ENCODE measurements at regions of chr1 and their contacts with region 1.

Region 1: DNA sequence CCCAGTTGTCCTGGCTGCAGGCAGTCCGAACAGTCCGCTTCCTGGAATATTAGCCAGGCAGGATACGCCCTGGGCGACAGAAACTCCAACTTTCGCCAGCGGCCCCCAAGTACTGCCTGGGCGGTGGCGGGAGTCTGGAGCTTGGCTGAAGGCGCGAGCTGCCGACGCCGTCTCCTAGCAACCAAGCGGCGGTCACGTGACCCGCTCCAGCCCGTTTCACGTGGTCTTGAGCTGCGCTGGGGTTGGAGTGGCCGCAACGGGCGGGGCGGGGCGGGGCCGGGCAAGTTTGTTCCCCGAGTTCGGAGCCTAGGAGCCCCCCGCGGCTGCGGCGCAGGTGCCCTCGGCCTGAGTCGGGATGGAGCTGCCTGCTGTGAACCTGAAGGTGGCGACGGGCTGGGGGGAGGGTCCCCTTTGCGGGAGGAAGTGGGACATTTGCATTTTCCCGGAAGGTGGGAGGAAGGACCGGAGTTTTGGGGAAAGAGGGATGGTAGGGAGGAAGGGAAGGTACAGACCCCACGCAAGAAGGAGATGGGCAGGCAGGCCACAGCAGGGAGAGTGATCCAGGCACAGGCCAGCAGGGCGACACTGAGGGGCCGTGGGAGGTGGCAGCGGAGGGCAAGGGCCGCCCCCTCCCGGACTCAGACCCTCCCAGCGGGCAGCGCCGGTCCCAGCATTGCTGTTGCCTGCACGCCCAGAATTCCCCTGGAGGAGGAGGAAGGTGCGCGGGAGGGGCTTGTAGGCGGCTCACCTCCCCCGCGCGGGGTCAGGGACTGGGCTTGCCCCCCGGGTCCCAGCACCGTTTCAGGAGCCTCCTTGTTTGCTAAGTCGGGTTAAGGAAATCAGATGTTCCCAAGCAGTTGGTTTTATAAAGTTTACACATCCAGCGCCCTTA is at the start of gene AGTRAP:
- DNase-seq: peak; percentile 89
- H3K4me3 ChIP-seq: peak within 1 kb of the TSS; percentile 42 to 93 (median 57)
- H3K27ac ChIP-seq: peak within 1 kb of the TSS; percentile 18
- H3K4me1 ChIP-seq: peaks cover 14% of the 10 kb centered on the region
- H3K27me3 ChIP-seq: no peaks in the 10 kb centered on the region
- CTCF ChIP-seq: peak in 1 of 2 donors; percentile 29
- POLR2A ChIP-seq: no peak
- total RNA-seq, gene AGTRAP: 40.3 and 41.6 TPM in 2 replicates

Region 2: DNA sequence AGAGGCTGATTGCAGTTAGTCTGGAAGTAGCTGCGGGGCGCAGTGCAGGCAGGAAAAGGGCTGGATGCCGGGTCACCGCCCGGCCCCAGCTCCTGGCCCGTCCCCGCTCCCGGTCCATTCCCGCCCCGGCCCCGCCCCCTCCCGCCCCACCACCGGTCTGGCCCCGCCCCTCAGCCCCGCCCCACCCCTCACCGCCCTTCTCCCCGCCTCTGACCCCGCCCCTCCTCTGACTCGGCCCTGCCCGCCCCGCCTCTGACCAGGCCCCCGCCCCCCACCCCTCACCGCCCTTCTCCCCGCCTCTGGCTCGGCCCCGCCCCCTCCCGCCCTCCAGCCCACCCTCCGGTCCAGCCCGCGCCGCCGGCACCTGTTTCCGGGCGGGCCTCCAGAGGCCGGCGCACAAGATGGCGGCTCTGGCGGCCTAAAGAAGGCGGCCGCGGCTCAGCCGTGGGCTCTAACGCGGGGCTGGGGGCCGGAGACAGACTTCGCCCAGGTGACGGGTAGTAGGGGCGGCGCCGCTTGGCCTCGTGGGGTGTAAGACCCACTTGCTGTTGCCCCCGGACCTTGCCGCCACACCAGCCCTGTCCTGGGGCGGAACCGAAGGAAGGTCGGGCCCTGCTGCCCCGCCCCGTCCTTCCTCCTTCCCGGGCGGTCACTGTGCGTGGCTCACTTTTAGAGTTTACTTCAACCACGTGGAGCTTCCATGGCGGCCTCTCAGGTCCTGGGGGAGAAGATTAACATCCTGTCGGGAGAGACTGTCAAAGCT is 463.1 kb before region 1 on chr1 and contains the start of gene UBIAD1:
- CTCF ChIA-PET with region 1: no interaction called
- POLR2A ChIA-PET with region 1: no interaction called
- dilution Hi-C with region 1: no loop called
- intact Hi-C with region 1: loop called (anchors 10 kb)
- DNase-seq: peak; percentile 87
- H3K4me3 ChIP-seq: peak within 1 kb of the TSS; percentile 52 to 77 (median 66)
- H3K27ac ChIP-seq: peak within 1 kb of the TSS; percentile 93
- H3K4me1 ChIP-seq: peaks cover 13% of the 10 kb centered on the region
- H3K27me3 ChIP-seq: no peaks in the 10 kb centered on the region
- CTCF ChIP-seq: no peak
- POLR2A ChIP-seq: peak; percentile 80
- total RNA-seq, gene UBIAD1: 12.7 and 13.0 TPM in 2 replicates

Region 3: DNA sequence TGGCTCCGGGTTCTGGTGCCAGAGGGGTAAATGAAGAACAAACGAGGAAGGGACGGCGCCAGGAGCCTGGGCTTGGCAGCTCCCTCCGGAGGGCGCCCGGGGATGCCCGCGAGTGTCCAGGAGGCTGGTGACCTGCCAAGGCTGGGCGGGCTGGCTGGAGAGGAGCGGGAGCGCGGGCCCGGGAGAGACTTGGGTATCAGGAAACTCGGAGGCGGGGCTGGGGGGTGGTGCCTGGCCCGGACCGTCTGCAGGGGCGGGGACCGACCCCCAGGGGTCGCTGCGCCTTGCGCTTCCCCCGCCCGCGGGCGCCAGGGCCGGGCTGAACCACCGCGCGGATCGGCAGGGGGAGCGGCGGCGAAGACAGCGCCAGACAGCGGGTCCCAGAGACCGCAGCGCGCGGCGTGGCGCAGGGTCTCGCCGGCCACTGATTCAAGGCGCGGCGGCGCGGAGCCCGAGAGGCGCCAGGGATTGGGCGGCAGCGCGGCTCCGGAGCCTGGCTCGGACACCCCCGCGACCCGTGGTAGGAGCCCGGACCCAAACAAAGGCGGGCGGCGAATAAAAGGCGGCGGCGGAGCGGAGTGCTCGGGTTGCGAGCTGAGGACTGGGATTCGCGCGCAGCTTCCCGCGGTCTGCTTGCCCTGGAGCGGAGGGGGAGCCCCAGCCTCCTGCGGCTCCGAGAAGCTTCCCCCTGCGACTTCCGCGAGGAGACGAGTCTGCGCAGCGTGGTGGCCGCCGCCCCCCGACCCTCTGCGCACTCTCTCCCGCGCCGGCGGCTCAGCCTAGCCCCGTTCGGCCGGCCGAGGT is 257.3 kb before region 1 on chr1 and contains the start of gene DISP3:
- CTCF ChIA-PET with region 1: no interaction called
- POLR2A ChIA-PET with region 1: no interaction called
- dilution Hi-C with region 1: no loop called
- intact Hi-C with region 1: loop called (anchors 1 kb)
- DNase-seq: peak; percentile 56
- H3K4me3 ChIP-seq: peak within 1 kb of the TSS; percentile 3 to 53 (median 3)
- H3K27ac ChIP-seq: peak within 1 kb of the TSS; percentile 55
- H3K4me1 ChIP-seq: peaks cover 4% of the 10 kb centered on the region
- H3K27me3 ChIP-seq: peaks cover 3 to 8% of the 10 kb centered on the region in 2 experiments
- CTCF ChIP-seq: peak; percentile 84 to 86
- POLR2A ChIP-seq: no peak
- total RNA-seq, gene DISP3: 0.49 and 0.51 TPM in 2 replicates

Region 4: DNA sequence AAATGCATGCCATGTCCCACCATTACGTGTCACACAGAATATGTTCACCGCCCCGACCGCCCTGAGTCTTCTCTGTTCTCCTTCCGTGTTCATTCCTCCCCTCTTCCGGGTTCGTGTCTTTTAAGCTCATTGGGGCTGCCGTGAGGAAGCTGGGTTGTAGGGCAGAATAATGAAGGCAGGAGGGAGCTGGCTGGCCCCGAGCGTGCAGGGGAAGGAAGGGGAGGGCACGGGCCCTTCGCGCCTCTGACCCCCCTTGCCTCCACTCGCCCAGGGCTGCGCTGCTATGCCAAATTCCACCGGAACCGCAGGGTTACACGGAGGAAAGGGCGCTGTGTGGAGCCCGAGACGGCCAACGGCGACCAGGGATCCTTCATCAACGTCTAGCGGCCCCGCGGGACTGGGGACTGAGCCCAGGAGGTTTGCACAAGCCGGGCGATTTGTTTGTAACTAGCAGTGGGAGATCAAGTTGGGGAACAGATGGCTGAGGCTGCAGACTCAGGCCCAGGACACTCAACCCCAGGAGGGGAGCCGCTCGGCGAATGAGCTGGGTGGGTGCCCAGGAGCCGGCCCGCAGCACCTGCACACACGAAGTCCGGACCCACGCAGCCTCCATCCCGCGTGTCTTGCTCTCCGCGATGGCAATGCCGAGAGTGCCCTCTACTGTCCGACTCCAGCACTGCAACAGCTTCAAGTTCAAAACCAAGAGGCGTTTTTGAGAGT is 16.6 kb before region 1 on chr1:
- CTCF ChIA-PET with region 1: interaction called, 22 read pairs
- POLR2A ChIA-PET with region 1: no interaction called
- dilution Hi-C with region 1: no loop called
- intact Hi-C with region 1: no loop called
- DNase-seq: peak; percentile 76
- H3K4me3 ChIP-seq: peak overlapping the region in 2 of 3 experiments; percentile 4 to 34
- H3K27ac ChIP-seq: no peak overlapping the region
- H3K4me1 ChIP-seq: peaks cover 4% of the 10 kb centered on the region
- H3K27me3 ChIP-seq: peaks cover 0 to 4% of the 10 kb centered on the region in 2 experiments
- CTCF ChIP-seq: peak; percentile 88 to 91
- POLR2A ChIP-seq: no peak

Region 5: DNA sequence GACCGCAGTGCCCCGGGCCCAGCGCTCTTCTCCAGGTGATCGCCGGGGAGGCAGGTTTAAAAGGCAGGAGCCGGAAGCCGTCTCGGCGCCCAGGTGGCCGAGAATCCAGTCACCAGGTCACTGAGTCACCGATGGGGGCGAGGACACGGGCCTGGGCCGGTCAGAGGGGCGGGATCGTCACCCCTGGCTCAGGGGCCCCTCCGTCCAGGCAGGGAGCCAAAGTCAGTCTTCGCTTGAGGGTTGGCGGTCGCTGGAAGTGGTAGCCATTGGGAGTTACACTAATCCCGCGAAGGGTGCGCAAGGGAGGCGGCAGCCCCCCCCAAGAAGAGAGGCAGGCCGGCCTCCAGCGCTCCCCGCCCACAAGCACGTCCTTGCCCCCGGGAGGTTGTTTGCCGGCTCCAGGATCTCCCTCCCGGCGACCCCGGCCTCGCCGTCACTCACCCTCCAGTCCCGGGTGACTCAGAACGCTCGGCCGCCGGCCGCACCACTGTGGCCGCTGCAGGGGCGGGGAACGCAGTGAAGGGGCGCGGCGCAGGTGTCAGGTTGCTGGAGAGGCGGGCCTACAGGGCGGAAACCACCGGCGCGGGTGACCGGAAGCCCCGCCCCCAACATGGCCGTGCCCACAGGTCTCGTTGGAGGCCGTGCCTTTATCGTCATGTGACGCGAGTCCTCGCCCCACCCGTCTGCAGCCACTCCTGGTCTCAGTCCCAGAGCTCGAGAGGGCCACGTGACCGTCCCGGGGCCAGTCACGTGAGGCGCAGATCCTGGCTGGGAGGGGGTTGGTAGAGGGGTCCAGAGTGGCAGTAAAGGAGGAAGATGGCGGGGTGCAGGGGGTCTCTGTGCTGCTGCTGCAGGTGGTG is 69.6 kb after region 1 on chr1 and contains the starts of genes CLCN6 and MTHFR:
- CTCF ChIA-PET with region 1: interaction called, 4 read pairs
- POLR2A ChIA-PET with region 1: interaction called, 3 read pairs
- dilution Hi-C with region 1: no loop called
- intact Hi-C with region 1: loop called (anchors 2 kb)
- DNase-seq: peak; percentile 100
- H3K4me3 ChIP-seq: peak within 1 kb of the TSS; percentile 75 to 97 (median 93)
- H3K27ac ChIP-seq: peak within 1 kb of the TSS; percentile 85
- H3K4me1 ChIP-seq: peaks cover 51% of the 10 kb centered on the region
- H3K27me3 ChIP-seq: no peaks in the 10 kb centered on the region
- CTCF ChIP-seq: no peak
- POLR2A ChIP-seq: peak; percentile 58
- total RNA-seq, gene CLCN6: 41.2 and 43.3 TPM in 2 replicates
- total RNA-seq, gene MTHFR: 25.3 and 26.5 TPM in 2 replicates

Measured in endothelial cell of umbilical vein (primary cell).